B cell (primary cell): ENCODE measurements at regions of chr3 and their contacts with region 1.

Region 1: DNA sequence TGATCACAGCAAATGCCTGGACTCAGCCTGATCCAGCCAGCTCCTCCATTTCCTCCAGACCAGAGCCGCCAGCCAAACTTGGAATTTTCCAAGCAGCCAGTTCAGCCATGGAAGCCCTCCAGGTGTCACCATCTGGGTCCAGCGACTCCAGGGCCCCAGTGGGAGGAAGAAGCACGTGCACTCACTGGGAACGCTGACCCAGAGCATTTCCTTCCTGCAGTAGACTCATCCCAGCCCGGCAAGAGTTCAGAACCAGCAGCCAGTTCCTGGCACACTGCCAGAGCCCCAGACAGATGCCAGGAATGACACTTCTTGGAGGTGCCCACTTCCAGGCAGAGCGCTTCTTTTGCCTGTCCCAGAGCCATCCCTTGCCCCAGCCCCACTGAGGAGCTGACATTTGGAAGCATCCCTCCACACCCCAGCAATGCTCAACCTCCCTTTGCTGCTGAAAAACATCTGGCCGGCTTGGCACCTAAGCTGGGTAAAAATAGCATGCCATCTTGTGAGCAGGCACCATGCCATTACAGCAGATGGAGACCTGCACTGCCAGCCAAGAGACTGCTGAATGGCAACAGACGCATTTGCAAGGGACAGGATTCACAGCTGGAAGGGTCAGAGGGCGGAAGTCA is 460.3 kb upstream of the PROK2 start:
- DNase-seq: no peak
- ATAC-seq: no peak
- H3K4me3 ChIP-seq: no peak overlapping the region
- H3K4me3 Mint-ChIP-seq: no peak overlapping the region
- H3K27ac ChIP-seq: no peak overlapping the region
- H3K27ac Mint-ChIP-seq: no peak overlapping the region
- H3K4me1 ChIP-seq: peaks cover 11 to 19% of the 10 kb centered on the region in 2 donors
- H3K4me1 Mint-ChIP-seq: peaks cover 24% of the 10 kb centered on the region
- H3K27me3 ChIP-seq: peaks cover 0 to 15% (median 5%) of the 10 kb centered on the region in 4 experiments
- H3K27me3 Mint-ChIP-seq: peaks cover 27% of the 10 kb centered on the region
- CTCF ChIP-seq: no peak

Region 2: GRCh38 chr3:72255791-72256559 is 10.7 kb after region 1 on chr3:
- CTCF ChIA-PET with region 1: interaction called, 3 read pairs
- POLR2A ChIA-PET with region 1: interaction called, 10 read pairs
- intact Hi-C with region 1: no loop called
- DNase-seq: peak; percentile 60
- ATAC-seq: peak; percentile 68
- H3K4me3 ChIP-seq: no peak overlapping the region
- H3K4me3 Mint-ChIP-seq: peak overlapping the region; percentile 57
- H3K27ac ChIP-seq: no peak overlapping the region
- H3K27ac Mint-ChIP-seq: peak overlapping the region; percentile 1
- H3K4me1 ChIP-seq: peaks cover 45 to 46% of the 10 kb centered on the region in 2 donors
- H3K4me1 Mint-ChIP-seq: peaks cover 47% of the 10 kb centered on the region
- H3K27me3 ChIP-seq: peaks cover 0 to 7% (median 1%) of the 10 kb centered on the region in 4 experiments
- H3K27me3 Mint-ChIP-seq: peaks cover 11% of the 10 kb centered on the region
- CTCF ChIP-seq: no peak

Region 3: DNA sequence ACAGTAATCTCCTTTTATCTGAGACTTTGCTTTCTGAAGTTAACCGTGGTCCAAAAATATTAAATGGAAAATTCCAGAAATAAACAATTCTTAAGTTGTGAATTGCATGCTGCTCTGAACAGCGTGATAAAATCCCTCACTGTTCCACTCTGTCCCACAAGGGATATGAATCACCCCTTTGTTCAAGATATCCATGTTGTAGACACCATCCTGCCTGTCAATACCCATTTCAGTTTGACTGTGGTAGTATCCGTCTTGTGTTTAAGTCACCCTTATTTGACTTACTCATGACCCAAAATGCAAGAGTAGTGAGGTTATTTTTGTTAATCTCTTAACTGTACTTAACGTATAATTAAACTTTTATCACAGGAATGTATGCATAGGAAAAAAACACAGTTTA is 167.9 kb after region 1 on chr3:
- CTCF ChIA-PET with region 1: no interaction called
- POLR2A ChIA-PET with region 1: no interaction called
- intact Hi-C with region 1: no loop called
- DNase-seq: no peak
- ATAC-seq: no peak
- H3K4me3 ChIP-seq: no peak overlapping the region
- H3K4me3 Mint-ChIP-seq: no peak overlapping the region
- H3K27ac ChIP-seq: no peak overlapping the region
- H3K27ac Mint-ChIP-seq: no peak overlapping the region
- H3K4me1 ChIP-seq: peaks cover 13 to 39% of the 10 kb centered on the region in 2 donors
- H3K4me1 Mint-ChIP-seq: peaks cover 70% of the 10 kb centered on the region
- H3K27me3 ChIP-seq: no peaks in the 10 kb centered on the region
- H3K27me3 Mint-ChIP-seq: no peaks in the 10 kb centered on the region
- CTCF ChIP-seq: no peak